ENCODE measurements at regions of chr6 and their contacts with region 1.

Region 1: DNA sequence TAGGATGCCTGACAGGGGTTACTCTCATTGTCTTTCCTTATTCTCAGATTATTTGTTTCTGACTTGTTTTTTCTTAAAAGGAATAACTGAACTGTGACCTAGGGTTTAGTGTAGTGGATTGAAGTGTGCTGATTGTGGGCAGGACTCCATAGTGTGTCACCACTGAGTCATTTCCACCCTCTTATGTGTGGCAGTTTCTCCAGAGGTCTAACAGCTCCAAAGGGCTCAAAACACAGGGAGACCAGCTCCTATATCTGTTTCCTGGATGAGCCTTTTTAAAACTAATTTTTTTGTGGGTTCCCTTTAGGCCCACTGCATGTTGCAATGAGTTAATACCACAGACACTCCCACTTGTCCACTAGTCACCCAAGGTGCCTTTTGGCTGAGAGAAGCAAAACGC is 951.1 kb upstream of the ADGRB3 start:
- DNase-seq: no peak
- H3K4me3 ChIP-seq: no peak overlapping the region
- H3K27ac ChIP-seq: no peak overlapping the region
- H3K4me1 ChIP-seq: no peaks in the 10 kb centered on the region
- H3K27me3 ChIP-seq: no peaks in the 10 kb centered on the region
- CTCF ChIP-seq: no peak
- EP300 ChIP-seq: no peak
- POLR2A ChIP-seq: no peak

Region 2: GRCh38 chr6:66210964-66211363 is 1473.0 kb before region 1 on chr6:
- intact Hi-C with region 1: no loop called
- DNase-seq: no peak
- H3K4me3 ChIP-seq: no peak overlapping the region
- H3K27ac ChIP-seq: no peak overlapping the region
- H3K4me1 ChIP-seq: no peaks in the 10 kb centered on the region
- H3K27me3 ChIP-seq: no peaks in the 10 kb centered on the region
- CTCF ChIP-seq: no peak
- EP300 ChIP-seq: no peak
- POLR2A ChIP-seq: no peak

Region 3: GRCh38 chr6:67706388-67706787 is 22.4 kb after region 1 on chr6:
- intact Hi-C with region 1: loop called in 1 of 4 experiments (anchors 2 kb)
- DNase-seq: no peak
- H3K4me3 ChIP-seq: no peak overlapping the region
- H3K27ac ChIP-seq: no peak overlapping the region
- H3K4me1 ChIP-seq: no peaks in the 10 kb centered on the region
- H3K27me3 ChIP-seq: no peaks in the 10 kb centered on the region
- CTCF ChIP-seq: no peak
- EP300 ChIP-seq: no peak
- POLR2A ChIP-seq: no peak